ENCODE measurements at regions of chr14 and their contacts with region 1.

Region 1: DNA sequence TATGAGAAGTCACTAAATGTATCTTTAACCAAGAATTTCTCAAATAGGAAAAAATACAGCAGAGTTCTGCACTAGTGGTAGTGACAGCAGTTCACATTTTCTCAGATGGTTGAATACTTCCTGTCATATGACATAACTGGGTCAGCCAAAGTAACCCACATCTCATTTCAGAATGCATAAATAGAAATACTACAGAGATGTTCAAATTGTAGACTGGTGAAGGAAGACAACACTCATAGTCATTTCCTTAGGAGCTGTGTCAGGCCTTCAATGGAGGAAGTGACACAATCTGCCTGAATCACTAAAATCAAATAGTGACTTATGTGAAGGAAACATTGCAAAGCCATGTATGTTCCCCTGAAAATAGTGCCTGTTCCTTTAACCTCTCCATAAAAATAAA is 32.4 kb downstream of the FERMT2 start:
- DNase-seq: peak; percentile 62
- ATAC-seq: peak; percentile 93
- H3K4me3 ChIP-seq: no peak overlapping the region
- H3K27ac ChIP-seq: peak overlapping the region; percentile 36
- H3K4me1 ChIP-seq: peaks cover 6% of the 10 kb centered on the region
- H3K27me3 ChIP-seq: no peaks in the 10 kb centered on the region
- CTCF ChIP-seq: no peak
- EP300 ChIP-seq: 0 out of 4 replicates have a peak, but pooled peaks have one; percentile 26 to 40
- POLR2A ChIP-seq: no peak
- RAD21 ChIP-seq: no peak

Region 2: DNA sequence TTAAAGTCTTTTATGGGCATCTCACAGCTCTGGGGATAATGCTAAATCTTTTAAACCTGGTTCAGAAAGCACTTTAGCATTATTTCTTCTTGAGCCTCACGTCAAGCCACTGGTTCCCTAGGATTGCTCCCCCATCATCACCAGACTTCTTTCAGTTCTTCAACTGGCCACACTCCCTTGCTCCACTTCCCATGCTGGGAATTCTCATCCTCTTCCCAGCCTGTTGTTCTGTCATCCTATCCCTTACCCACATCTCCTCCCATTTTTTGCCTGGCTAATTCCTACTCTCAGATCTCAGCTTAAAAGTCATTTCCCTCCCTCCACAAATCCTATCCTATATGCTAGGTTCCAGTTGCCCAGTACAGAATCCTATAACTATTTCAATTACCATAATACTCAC is 18.0 kb after region 1 on chr14:
- CTCF ChIA-PET with region 1: interaction called, 13 read pairs
- POLR2A ChIA-PET with region 1: interaction called, 4 read pairs
- RAD21 ChIA-PET with region 1: interaction called, 9 read pairs
- SMC1A ChIA-PET with region 1: interaction called, 79 read pairs
- in situ Hi-C with region 1: no loop called
- intact Hi-C with region 1: no loop called
- DNase-seq: no peak
- ATAC-seq: no peak
- H3K4me3 ChIP-seq: no peak overlapping the region
- H3K27ac ChIP-seq: no peak overlapping the region
- H3K4me1 ChIP-seq: no peaks in the 10 kb centered on the region
- H3K27me3 ChIP-seq: no peaks in the 10 kb centered on the region; a peak in 1 of 4 replicates
- CTCF ChIP-seq: no peak
- EP300 ChIP-seq: no peak
- POLR2A ChIP-seq: no peak
- RAD21 ChIP-seq: no peak

Region 3: GRCh38 chr14:53022593-53022992 is 104.1 kb after region 1 on chr14:
- CTCF ChIA-PET with region 1: no interaction called
- POLR2A ChIA-PET with region 1: no interaction called
- RAD21 ChIA-PET with region 1: no interaction called
- SMC1A ChIA-PET with region 1: no interaction called
- in situ Hi-C with region 1: no loop called
- intact Hi-C with region 1: no loop called
- DNase-seq: no peak
- ATAC-seq: no peak
- H3K4me3 ChIP-seq: no peak overlapping the region
- H3K27ac ChIP-seq: no peak overlapping the region
- H3K4me1 ChIP-seq: no peaks in the 10 kb centered on the region
- H3K27me3 ChIP-seq: no peaks in the 10 kb centered on the region
- CTCF ChIP-seq: no peak
- EP300 ChIP-seq: no peak
- POLR2A ChIP-seq: no peak
- RAD21 ChIP-seq: no peak

Region 4: GRCh38 chr14:53441789-53442188 is 523.3 kb after region 1 on chr14:
- CTCF ChIA-PET with region 1: no interaction called
- POLR2A ChIA-PET with region 1: no interaction called
- RAD21 ChIA-PET with region 1: no interaction called
- SMC1A ChIA-PET with region 1: no interaction called
- in situ Hi-C with region 1: no loop called
- intact Hi-C with region 1: no loop called
- DNase-seq: no peak
- ATAC-seq: no peak
- H3K4me3 ChIP-seq: no peak overlapping the region
- H3K27ac ChIP-seq: no peak overlapping the region
- H3K4me1 ChIP-seq: no peaks in the 10 kb centered on the region
- H3K27me3 ChIP-seq: no peaks in the 10 kb centered on the region
- CTCF ChIP-seq: no peak
- EP300 ChIP-seq: no peak
- POLR2A ChIP-seq: no peak
- RAD21 ChIP-seq: no peak